Cardiac septum (tissue), 1 donor: ENCODE measurements at regions of chr2 and their contacts with region 1.

Region 1: GRCh38 chr2:231514103-231514950 is 15.9 kb downstream of the NMUR1 start:
- DNase-seq: peak; percentile 98

Region 2: GRCh38 chr2:232490224-232491138 is 976.2 kb after region 1 on chr2:
- intact Hi-C with region 1: loop called (anchors 5 kb)
- DNase-seq: no peak